HepG2 (cell line): ENCODE measurements at regions of chr17 and their contacts with region 1.

Region 1: DNA sequence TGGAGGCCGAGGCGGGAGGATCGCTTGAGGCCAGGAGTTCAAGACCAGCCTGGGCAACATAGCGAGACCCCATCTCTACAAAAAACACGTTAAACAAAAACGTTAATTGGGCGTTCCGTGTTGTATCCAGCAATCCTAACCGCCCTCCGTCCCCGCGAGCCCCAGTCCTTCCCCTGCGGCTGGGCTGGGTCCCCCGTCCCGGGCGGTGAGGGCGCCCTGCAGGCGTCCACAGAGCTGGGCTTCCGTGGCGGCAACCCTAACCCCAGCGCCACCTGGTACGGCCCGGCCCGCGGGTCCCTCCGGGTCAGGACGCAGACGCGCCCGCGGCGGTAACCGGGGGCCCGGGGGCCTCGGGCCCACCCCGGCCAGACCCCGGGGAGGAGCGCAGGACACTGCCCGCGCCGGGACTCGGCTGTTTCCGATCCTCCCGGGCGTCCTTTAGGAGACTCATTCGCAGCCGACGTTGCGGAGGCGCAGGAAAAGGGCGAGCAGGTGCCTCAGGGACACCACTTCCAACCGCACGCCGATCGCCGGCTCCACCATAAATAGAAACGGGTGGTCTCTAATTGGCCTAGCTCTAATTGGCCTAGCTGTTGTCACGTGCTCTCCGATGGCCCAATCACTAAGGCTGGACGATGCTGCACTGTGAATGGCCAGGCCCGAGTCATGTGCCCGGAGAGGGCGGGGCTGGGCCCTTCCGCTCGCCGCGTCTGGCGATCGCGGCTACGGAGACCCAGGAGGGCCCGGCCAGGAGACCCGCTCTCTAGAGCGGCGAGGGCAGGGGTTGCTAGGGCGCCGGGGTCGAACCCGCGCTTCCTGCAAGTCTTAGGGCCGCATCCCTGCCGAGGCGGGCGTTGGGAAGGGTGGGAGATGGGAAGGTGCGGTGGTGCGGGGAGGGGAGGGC is 19.0 kb upstream of the CSNK1D start:
- DNase-seq: peak; percentile 99
- ATAC-seq: peak; percentile 89
- H3K4me3 ChIP-seq: peak overlapping the region; percentile 80 to 87 (median 81)
- H3K27ac ChIP-seq: peak overlapping the region; percentile 93
- H3K4me1 ChIP-seq: peaks cover 88% of the 10 kb centered on the region
- H3K27me3 ChIP-seq: no peaks in the 10 kb centered on the region
- CTCF ChIP-seq: no peak
- EP300 ChIP-seq: peak; percentile 51 to 70
- POLR2A ChIP-seq: peak; percentile 99 to 100
- RAD21 ChIP-seq: peak; percentile 43

Region 2: GRCh38 chr17:81890447-81891299 is 401.8 kb before region 1 on chr17:
- CTCF ChIA-PET with region 1: no interaction called
- POLR2A ChIA-PET with region 1: no interaction called
- in situ Hi-C with region 1: no loop called
- intact Hi-C with region 1: no loop called
- DNase-seq: no peak
- ATAC-seq: no peak
- H3K4me3 ChIP-seq: peak overlapping the region; percentile 94 to 98 (median 94)
- H3K27ac ChIP-seq: peak overlapping the region; percentile 76
- H3K4me1 ChIP-seq: peaks cover 36% of the 10 kb centered on the region
- H3K27me3 ChIP-seq: peaks cover 0 to 6% of the 10 kb centered on the region in 2 experiments; a peak in 2 of 5 replicates
- CTCF ChIP-seq: no peak
- EP300 ChIP-seq: no peak
- POLR2A ChIP-seq: no peak
- RAD21 ChIP-seq: no peak

Region 3: DNA sequence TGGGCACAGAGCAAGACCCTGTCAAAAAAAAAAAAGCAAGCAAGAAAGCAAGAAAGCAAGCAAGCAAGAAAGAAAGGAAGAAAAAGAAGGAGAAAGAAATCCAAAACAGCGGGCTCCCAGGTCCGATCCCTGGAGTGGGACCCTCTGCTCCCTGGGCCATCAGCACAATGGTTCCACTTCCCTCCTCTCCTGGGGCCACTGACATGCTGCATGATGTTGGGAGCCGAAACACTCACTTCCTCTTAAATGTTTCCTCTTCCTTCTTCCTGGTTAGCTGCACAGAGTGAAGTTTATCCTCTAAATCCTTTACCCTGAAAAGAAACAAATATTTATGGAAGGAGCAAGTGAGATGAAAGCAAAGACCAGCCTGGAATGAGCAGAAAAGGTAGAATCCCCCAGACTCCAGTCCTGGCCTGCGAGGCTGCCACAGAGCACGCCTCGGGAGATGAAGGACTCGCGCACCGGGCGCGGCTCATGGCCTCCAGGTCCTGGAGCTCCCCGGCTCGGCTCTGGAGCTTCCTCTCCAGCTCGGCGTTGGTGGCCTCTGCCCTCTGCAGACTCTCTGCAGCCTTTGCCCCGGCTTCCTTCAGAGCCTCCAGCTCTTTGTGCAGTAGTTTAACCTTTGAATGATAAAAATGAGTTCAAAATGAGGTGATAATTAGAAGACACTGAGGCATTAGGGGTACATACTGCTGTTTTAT is 98.8 kb before region 1 on chr17:
- CTCF ChIA-PET with region 1: no interaction called
- POLR2A ChIA-PET with region 1: no interaction called
- in situ Hi-C with region 1: no loop called
- intact Hi-C with region 1: no loop called
- DNase-seq: no peak
- ATAC-seq: no peak
- H3K4me3 ChIP-seq: no peak overlapping the region
- H3K27ac ChIP-seq: no peak overlapping the region
- H3K4me1 ChIP-seq: peaks cover 4% of the 10 kb centered on the region
- H3K27me3 ChIP-seq: no peaks in the 10 kb centered on the region
- CTCF ChIP-seq: no peak
- EP300 ChIP-seq: no peak
- POLR2A ChIP-seq: no peak
- RAD21 ChIP-seq: no peak

Region 4: GRCh38 chr17:82230627-82231311 is 61.7 kb before region 1 on chr17:
- CTCF ChIA-PET with region 1: no interaction called
- POLR2A ChIA-PET with region 1: interaction called, 28 read pairs
- in situ Hi-C with region 1: no loop called
- intact Hi-C with region 1: no loop called
- DNase-seq: peak; percentile 87
- ATAC-seq: peak; percentile 53
- H3K4me3 ChIP-seq: peak overlapping the region; percentile 76 to 99 (median 97)
- H3K27ac ChIP-seq: peak overlapping the region; percentile 84
- H3K4me1 ChIP-seq: peaks cover 75% of the 10 kb centered on the region
- H3K27me3 ChIP-seq: no peaks in the 10 kb centered on the region; a peak in 1 of 5 replicates
- CTCF ChIP-seq: peak; percentile 61
- EP300 ChIP-seq: peak in 1 of 2 experiments; percentile 53; a peak in 2 of 4 replicates
- POLR2A ChIP-seq: no peak; a peak in 1 of 4 replicates
- RAD21 ChIP-seq: peak; percentile 46; the same call in 1 of the 2 replicates

Region 5: GRCh38 chr17:82273327-82274133 is 19.0 kb before region 1 on chr17 and contains the start of gene CSNK1D:
- CTCF ChIA-PET with region 1: no interaction called
- POLR2A ChIA-PET with region 1: interaction called, 119 read pairs
- in situ Hi-C with region 1: no loop called
- intact Hi-C with region 1: no loop called
- DNase-seq: peak; percentile 85
- ATAC-seq: peak; percentile 83
- H3K4me3 ChIP-seq: peak within 1 kb of the TSS; percentile 88 to 97 (median 88)
- H3K27ac ChIP-seq: peak within 1 kb of the TSS; percentile 92
- H3K4me1 ChIP-seq: peaks cover 75% of the 10 kb centered on the region
- H3K27me3 ChIP-seq: no peaks in the 10 kb centered on the region; a peak in 1 of 5 replicates
- CTCF ChIP-seq: no peak; the same call in none of the 2 replicates
- EP300 ChIP-seq: peak in 1 of 2 experiments; percentile 42; a peak in 2 of 4 replicates
- POLR2A ChIP-seq: peak; percentile 71 to 92
- RAD21 ChIP-seq: peak; percentile 77
- total RNA-seq, gene CSNK1D: 28.4 and 31.5 TPM in 2 replicates

Region 6: DNA sequence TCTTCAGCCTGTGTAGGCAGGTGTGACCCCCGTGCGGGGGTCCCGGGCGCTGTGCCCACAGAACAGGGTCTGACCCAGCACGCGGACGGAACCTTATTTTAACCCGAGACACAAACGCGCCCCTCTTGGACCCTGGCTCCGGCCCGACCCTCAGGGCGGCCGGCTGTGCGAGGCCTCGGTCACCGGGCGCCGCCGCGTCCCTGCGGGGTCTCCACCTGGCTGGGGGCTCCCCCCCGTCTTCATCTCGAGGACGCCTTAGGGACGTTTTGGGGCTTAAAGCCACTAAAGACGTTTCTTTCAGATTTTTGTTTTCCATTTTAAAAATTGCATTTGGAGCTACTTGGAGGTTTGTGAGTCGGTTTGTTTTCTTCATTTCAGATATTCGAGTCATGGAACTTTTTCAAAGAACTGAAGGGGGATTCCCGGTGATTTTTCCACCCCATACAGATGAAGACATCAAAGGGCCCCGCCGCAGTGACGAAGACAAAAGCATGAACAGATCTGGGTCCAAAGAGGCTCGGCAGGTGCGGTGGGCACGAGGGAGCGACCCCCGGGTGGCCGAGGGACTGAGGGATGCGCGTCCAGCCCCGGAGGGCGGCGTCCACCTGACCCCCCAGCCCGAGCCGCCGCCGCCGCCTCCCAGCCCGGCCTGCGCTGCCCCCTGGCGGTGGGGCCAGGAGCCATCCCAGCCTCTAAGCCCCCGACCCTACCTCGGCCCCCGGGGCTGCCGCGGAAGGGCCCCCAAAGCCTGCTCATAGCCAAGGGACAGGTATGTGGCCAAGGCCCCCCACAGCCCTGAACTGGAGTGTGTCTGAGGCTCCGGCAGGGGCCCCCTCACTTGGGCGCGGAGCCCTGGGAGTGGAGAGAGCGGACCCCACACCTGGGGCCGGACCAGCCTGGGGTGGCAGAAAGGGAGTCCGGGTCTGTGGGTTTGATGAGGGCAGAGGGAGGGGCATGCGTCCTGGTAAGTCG is 28.7 kb after region 1 on chr17:
- CTCF ChIA-PET with region 1: no interaction called
- POLR2A ChIA-PET with region 1: interaction called, 270 read pairs
- in situ Hi-C with region 1: no loop called
- intact Hi-C with region 1: no loop called
- DNase-seq: no peak
- ATAC-seq: peak; percentile 3; the same call in 1 of the 3 replicates
- H3K4me3 ChIP-seq: peak overlapping the region; percentile 22 to 71 (median 55); a peak in 5 of 6 replicates
- H3K27ac ChIP-seq: peak overlapping the region; percentile 63
- H3K4me1 ChIP-seq: peaks cover 90% of the 10 kb centered on the region
- H3K27me3 ChIP-seq: no peaks in the 10 kb centered on the region; a peak in 1 of 5 replicates
- CTCF ChIP-seq: peak; percentile 92
- EP300 ChIP-seq: no peak
- POLR2A ChIP-seq: no peak
- RAD21 ChIP-seq: peak; percentile 98

Region 7: DNA sequence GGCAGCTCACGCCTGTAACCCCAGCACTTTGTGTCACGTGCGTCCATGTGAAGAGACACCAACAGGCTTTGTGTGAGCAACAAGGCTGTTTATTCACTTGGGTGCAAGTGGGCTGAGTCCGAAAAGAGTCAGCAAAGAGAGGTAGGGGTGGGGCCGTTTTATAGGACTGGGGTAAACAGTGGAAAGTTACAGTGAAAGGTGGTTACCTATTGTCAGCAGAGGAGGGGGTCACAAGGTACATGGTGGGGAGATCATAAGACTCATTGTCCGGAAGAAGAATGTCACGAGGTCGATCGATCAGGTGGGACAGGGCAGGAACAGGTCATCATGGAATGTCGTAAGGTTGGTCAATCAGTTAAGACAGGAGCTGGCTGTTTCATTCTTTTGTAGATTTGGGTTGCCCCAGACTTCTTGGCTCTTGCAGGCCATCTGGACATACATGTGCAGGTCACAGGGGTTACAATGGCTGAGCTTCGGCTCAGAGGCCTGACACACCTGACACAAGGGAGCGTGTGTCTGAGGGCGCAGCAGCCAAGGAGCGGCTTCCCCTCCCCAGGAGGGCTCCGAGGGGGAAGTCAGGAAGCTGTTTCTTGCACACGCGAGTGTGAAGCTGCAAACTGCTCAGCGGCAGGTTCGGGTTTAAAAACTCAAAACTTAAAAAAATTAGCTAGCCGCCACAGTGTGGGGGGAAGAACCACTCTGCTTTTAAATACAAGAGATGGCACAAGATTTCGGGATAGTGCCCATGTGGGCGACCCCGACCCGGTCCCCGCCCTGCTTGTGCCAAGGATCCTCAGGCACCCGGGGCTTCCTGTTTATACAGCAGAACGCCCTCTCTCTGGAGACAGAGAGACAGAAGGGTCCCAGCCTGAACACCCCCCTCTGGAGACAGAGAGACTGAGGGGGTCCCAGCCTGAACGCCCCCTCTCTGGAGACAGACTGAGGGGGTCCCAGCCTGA is 54.1 kb after region 1 on chr17:
- CTCF ChIA-PET with region 1: no interaction called
- POLR2A ChIA-PET with region 1: interaction called, 73 read pairs
- in situ Hi-C with region 1: no loop called
- intact Hi-C with region 1: no loop called
- DNase-seq: peak; percentile 100
- ATAC-seq: peak; percentile 24
- H3K4me3 ChIP-seq: no peak overlapping the region; a peak in 1 of 6 replicates
- H3K27ac ChIP-seq: peak overlapping the region; percentile 83
- H3K4me1 ChIP-seq: peaks cover 94% of the 10 kb centered on the region
- H3K27me3 ChIP-seq: no peaks in the 10 kb centered on the region
- CTCF ChIP-seq: peak; percentile 20; the same call in 1 of the 2 replicates
- EP300 ChIP-seq: peak; percentile 90 to 98
- POLR2A ChIP-seq: peak; percentile 52 to 78; a peak in 3 of 4 replicates
- RAD21 ChIP-seq: peak; percentile 68